ENCODE measurements at regions of chr20 and their contacts with region 1.

Region 1: GRCh38 chr20:48657475-48658470 is 170.0 kb downstream of the PREX1 start:
- DNase-seq: peak; percentile 71
- ATAC-seq: peak; percentile 95
- H3K4me3 Mint-ChIP-seq: no peak overlapping the region
- H3K27ac Mint-ChIP-seq: peak overlapping the region; percentile 63
- H3K4me1 Mint-ChIP-seq: peaks cover 17% of the 10 kb centered on the region
- H3K27me3 Mint-ChIP-seq: no peaks in the 10 kb centered on the region
- CTCF ChIP-seq: peak; percentile 88

Region 2: GRCh38 chr20:48668451-48668952 is 10.7 kb after region 1 on chr20:
- CTCF ChIA-PET with region 1: interaction called, 11 read pairs
- POLR2A ChIA-PET with region 1: no interaction called
- intact Hi-C with region 1: no loop called
- DNase-seq: no peak
- ATAC-seq: no peak
- H3K4me3 Mint-ChIP-seq: no peak overlapping the region
- H3K27ac Mint-ChIP-seq: peak overlapping the region; percentile 20
- H3K4me1 Mint-ChIP-seq: peaks cover 3% of the 10 kb centered on the region
- H3K27me3 Mint-ChIP-seq: no peaks in the 10 kb centered on the region
- CTCF ChIP-seq: no peak

Region 3: GRCh38 chr20:48797275-48797825 is 139.6 kb after region 1 on chr20:
- CTCF ChIA-PET with region 1: interaction called, 13 read pairs
- POLR2A ChIA-PET with region 1: interaction called, 3 read pairs
- intact Hi-C with region 1: no loop called
- DNase-seq: no peak
- ATAC-seq: no peak
- H3K4me3 Mint-ChIP-seq: no peak overlapping the region
- H3K27ac Mint-ChIP-seq: no peak overlapping the region
- H3K4me1 Mint-ChIP-seq: peaks cover 65% of the 10 kb centered on the region
- H3K27me3 Mint-ChIP-seq: no peaks in the 10 kb centered on the region
- CTCF ChIP-seq: no peak

Region 4: DNA sequence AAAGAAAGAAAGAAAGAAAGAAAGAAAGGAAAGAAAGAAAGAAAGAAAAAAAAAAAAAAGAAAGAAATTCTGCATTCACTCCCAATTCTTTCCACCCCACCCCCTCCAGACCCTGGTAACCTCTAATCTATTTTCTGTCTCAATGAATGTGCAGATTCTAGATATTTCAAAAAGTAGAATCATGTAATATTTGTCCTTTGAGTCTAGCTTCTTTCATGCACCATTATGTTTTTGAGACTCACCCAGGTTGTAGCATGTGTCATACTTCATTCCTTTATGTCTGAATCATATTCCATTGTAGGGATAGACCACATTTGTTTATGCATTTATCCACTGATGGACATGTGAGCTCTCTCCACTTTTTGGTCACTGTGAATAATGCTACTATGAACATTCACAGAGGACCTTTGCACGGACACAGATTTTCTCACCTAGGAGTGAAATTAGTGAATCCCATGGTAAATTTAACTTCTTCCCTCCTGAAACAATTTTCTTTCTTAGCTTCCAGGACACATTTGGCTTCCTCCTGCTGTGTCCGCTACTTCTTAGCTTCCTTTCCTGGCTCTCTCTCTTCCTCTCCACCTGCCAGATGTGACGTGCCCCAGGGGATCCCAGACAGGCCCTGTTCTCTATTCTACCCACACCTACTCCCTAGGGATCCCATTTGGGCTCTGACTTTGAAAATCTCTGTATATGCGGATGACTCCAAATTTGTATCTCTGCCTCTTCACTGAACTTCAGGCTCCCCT is 239.6 kb after region 1 on chr20:
- CTCF ChIA-PET with region 1: interaction called, 24 read pairs
- POLR2A ChIA-PET with region 1: interaction called, 6 read pairs
- intact Hi-C with region 1: no loop called
- DNase-seq: no peak
- ATAC-seq: no peak
- H3K4me3 Mint-ChIP-seq: no peak overlapping the region
- H3K27ac Mint-ChIP-seq: no peak overlapping the region
- H3K4me1 Mint-ChIP-seq: no peaks in the 10 kb centered on the region
- H3K27me3 Mint-ChIP-seq: no peaks in the 10 kb centered on the region
- CTCF ChIP-seq: no peak

Region 5: DNA sequence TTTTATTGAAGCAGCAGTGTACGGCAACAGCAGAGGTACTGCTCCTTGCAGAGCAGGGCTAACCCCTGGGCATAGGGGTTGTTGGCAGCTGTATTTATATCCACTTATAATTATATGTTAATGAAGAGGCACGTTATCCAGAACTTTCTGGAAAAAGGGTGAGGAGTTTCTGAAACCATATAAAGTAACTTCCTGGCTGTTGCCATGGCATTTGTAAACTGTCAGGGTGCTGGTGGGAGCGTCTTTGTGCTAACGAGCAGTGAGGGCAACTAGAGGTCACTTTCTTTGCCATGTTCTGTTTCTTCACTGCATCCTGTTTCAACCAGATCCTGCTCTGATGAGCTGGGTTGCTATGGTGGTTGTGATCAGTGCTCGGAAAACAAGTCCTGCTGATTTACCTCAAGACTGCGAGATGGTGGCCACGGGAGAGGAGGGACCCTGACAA is 252.6 kb after region 1 on chr20:
- CTCF ChIA-PET with region 1: interaction called, 70 read pairs
- POLR2A ChIA-PET with region 1: interaction called, 4 read pairs
- intact Hi-C with region 1: loop called (anchors 1 kb)
- DNase-seq: no peak
- ATAC-seq: peak; percentile 24
- H3K4me3 Mint-ChIP-seq: no peak overlapping the region
- H3K27ac Mint-ChIP-seq: no peak overlapping the region
- H3K4me1 Mint-ChIP-seq: peaks cover 2% of the 10 kb centered on the region
- H3K27me3 Mint-ChIP-seq: peaks cover 3% of the 10 kb centered on the region
- CTCF ChIP-seq: no peak

Measured in activated CD8-positive, alpha-beta T cell treated with anti-CD3 and anti-CD28 coated beads for 36 hours (primary cell).